Activated CD4-positive, alpha-beta T cell treated with anti-CD3 and anti-CD28 coated beads, Interleukin-2, amount 10 ng/mL, durations not matched to agents 24 days and 14 days (primary cell): ENCODE measurements at regions of chr11 and their contacts with region 1.

Region 1: GRCh38 chr11:67428052-67428914 is at the start of gene RPS6KB2:
- DNase-seq: peak; percentile 100
- H3K4me3 Mint-ChIP-seq: peak within 1 kb of the TSS; percentile 98
- H3K27ac Mint-ChIP-seq: peak within 1 kb of the TSS; percentile 97
- H3K4me1 Mint-ChIP-seq: peaks cover 25% of the 10 kb centered on the region
- H3K27me3 Mint-ChIP-seq: no peaks in the 10 kb centered on the region
- total RNA-seq, gene RPS6KB2: 79.3 and 83.1 TPM in 2 replicates

Region 2: GRCh38 chr11:67353317-67354074 is 74.8 kb before region 1 on chr11 and contains the start of gene POLD4:
- intact Hi-C with region 1: loop called (anchors 2 kb)
- DNase-seq: peak; percentile 99
- H3K4me3 Mint-ChIP-seq: peak within 1 kb of the TSS; percentile 97
- H3K27ac Mint-ChIP-seq: peak within 1 kb of the TSS; percentile 98
- H3K4me1 Mint-ChIP-seq: peaks cover 41% of the 10 kb centered on the region
- H3K27me3 Mint-ChIP-seq: peaks cover 5% of the 10 kb centered on the region
- total RNA-seq, gene POLD4: 36.0 and 36.4 TPM in 2 replicates

Region 3: DNA sequence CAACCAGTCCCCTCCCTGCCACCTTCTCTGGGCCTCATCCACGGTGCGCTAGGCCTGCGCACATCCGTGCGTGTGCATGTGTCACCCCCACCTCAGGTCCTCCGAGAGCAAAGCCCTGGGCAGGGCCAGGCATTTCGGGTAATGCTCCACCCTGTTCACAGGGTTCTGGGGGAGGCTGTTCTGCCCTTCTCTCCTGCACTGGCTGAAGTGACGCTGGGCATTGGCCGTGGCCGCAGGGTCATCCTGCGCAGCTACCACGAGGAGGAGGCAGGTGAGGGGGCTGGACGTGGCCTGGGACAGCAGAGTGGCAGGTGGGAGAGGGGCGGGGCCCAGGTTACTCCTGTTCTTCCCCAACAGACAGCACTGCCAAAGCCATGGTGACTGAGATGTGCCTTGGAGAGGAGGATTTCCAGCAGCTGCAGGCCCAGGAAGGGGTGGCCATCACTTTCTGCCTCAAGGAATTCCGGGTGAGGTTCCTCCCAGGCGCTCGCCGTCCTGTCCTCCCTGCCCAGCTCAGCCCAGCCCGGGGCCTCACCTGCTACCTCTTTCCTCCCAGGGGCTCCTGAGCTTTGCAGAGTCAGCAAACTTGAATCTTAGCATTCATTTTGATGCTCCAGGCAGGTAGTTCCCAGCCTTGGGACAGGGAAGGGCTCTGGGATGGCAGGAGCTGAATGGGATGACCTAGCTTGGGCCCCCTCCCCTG is 32.6 kb before region 1 on chr11:
- intact Hi-C with region 1: no loop called
- DNase-seq: no peak
- H3K4me3 Mint-ChIP-seq: no peak overlapping the region
- H3K27ac Mint-ChIP-seq: no peak overlapping the region
- H3K4me1 Mint-ChIP-seq: peaks cover 40% of the 10 kb centered on the region
- H3K27me3 Mint-ChIP-seq: no peaks in the 10 kb centered on the region

Region 4: DNA sequence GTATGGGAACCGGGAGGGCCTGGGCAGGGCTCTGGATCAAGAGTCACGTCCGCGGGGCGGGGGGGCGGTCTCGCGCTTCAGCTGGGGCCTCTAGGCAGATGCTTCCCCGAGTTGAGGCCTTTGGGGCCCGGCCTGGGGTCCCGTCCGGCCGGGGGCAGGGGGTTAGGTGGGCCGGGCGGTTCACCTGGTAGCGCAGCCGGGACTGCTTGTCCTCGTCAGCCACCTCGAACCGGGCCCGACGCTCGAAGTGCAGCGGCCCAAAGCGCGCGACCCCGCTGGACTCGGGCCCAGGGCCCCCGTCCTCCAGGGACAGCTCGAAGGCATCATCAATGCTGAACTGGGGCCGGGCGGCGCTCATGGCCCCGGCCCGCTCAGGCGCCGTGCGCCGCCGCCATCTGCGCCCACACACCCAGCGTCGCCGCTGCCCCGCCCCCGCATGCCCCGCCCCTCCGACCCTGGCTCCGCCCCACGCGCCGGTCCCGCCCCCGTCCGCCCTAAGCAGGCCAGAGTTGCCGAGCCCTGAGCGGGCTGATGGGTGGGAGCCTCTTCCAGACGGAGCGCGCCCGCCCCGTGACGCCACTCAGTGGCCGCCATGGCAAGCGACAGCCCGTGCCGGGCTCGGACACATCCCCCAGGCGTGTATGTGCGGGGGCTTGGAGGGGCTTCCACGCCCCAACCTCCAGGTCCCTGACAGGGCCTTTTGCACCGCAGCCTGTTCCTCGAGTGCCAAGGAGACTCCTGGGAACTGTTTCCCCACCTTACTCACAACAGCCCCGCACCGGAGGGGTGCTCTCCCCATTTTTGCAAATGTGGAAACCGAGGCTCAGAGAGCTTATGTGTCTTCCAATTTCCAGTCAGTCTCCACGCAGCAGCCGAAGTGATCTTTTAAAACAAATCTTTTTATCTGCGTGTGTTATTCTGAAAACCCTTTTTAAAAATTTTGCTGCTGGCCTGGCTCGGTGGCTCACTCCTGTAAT is 40.8 kb after region 1 on chr11 and contains the start of gene TMEM134:
- intact Hi-C with region 1: loop called (anchors 1 kb)
- DNase-seq: peak; percentile 96
- H3K4me3 Mint-ChIP-seq: peak within 1 kb of the TSS; percentile 96
- H3K27ac Mint-ChIP-seq: peak within 1 kb of the TSS; percentile 84
- H3K4me1 Mint-ChIP-seq: peaks cover 25% of the 10 kb centered on the region
- H3K27me3 Mint-ChIP-seq: no peaks in the 10 kb centered on the region
- total RNA-seq, gene TMEM134: 56.8 and 58.3 TPM in 2 replicates

Region 5: GRCh38 chr11:67606492-67607201 is 178.4 kb after region 1 on chr11 and contains the start of gene NDUFV1:
- intact Hi-C with region 1: loop called (anchors 10 kb)
- DNase-seq: peak; percentile 99
- H3K4me3 Mint-ChIP-seq: peak within 1 kb of the TSS; percentile 95
- H3K27ac Mint-ChIP-seq: peak within 1 kb of the TSS; percentile 95
- H3K4me1 Mint-ChIP-seq: peaks cover 18% of the 10 kb centered on the region
- H3K27me3 Mint-ChIP-seq: peaks cover 10% of the 10 kb centered on the region
- total RNA-seq, gene NDUFV1: 304 and 321 TPM in 2 replicates